Dorsolateral prefrontal cortex (tissue), 120 donors: ENCODE measurements at regions of chr6 and their contacts with region 1.

Region 1: GRCh38 chr6:132161283-132161682 is 210.1 kb upstream of the CCN2 start:
- DNase-seq: no peak
- H3K4me3 ChIP-seq: no peak overlapping the region
- H3K27ac ChIP-seq: no peak overlapping the region
- H3K27me3 ChIP-seq: no peaks in the 10 kb centered on the region
- CTCF ChIP-seq: peak in 55 of 56 donors; percentile 5 to 87 (median 69)

Region 2: DNA sequence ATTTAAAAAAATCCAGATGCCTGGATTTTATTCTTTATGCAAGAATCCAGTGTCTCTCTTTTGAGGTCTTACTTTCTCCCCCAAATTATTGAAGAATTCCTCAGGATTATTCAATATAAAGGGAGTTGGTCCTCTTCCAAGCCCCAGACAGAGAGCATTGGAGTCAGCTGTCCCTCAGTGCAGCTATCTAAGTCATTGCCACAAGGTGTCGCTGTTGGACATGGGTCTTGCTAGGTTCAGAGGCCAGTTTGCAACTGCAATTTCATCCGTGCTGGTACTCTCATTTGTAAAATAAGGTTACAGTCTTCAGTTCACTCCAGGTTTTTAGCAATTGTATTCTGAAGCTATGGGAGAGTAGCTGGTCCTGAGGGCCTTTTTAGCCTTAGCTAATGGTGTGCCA is 237.9 kb before region 1 on chr6:
- intact Hi-C with region 1: loop called (anchors 5 to 10 kb)
- DNase-seq: no peak
- H3K4me3 ChIP-seq: no peak overlapping the region
- H3K27ac ChIP-seq: no peak overlapping the region
- H3K27me3 ChIP-seq: peaks cover 0 to 8% (median 0%) of the 10 kb centered on the region in 45 donors
- CTCF ChIP-seq: peak in 55 of 56 donors; percentile 16 to 76 (median 58)

Region 3: GRCh38 chr6:131949909-131950766 is 211.1 kb before region 1 on chr6:
- intact Hi-C with region 1: loop called (anchors 2 to 5 kb)
- DNase-seq: peak; percentile 11 to 73 (median 58)
- H3K4me3 ChIP-seq: peak overlapping the region; percentile 44 to 82 (median 66)
- H3K27ac ChIP-seq: peak overlapping the region in 56 of 59 donors; percentile 14 to 92 (median 70)
- H3K27me3 ChIP-seq: peaks cover 0 to 9% (median 0%) of the 10 kb centered on the region in 45 donors
- CTCF ChIP-seq: peak in 52 of 56 donors; percentile 28 to 75 (median 55)

Region 4: DNA sequence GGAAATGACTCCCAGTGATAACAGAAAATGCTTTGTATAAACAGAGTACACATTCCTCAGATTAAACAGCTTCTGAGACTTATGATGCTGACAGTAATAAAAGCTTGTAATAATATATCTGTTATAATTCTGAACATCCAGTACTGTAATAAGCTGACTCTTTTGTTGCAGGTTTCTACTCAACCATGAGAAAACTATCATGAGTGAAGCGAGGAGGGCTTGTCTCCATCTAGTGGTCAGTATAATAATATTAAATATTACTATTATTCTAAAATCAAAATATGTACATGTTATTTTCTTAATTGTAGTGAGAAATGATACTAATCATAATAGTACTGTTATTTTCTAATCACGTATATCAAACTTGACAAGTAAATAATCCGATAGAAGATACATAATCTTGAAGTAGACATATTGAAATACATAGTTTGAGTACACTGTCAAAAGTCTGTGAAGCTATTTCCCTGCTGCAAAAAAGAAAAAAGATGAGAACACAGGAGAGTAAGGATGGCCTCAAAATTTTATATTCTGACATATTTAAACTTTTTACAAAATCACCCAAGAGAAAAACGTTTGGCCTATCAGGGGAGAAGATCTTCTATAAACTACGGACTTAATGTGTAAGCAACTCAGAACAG is 56.9 kb after region 1 on chr6:
- intact Hi-C with region 1: loop called in 1 of 2 experiments (anchors 10 kb)
- DNase-seq: no peak
- H3K4me3 ChIP-seq: no peak overlapping the region
- H3K27ac ChIP-seq: no peak overlapping the region
- H3K27me3 ChIP-seq: peaks cover 0 to 3% (median 0%) of the 10 kb centered on the region in 45 donors
- CTCF ChIP-seq: peak; percentile 48 to 89 (median 68)

Region 5: DNA sequence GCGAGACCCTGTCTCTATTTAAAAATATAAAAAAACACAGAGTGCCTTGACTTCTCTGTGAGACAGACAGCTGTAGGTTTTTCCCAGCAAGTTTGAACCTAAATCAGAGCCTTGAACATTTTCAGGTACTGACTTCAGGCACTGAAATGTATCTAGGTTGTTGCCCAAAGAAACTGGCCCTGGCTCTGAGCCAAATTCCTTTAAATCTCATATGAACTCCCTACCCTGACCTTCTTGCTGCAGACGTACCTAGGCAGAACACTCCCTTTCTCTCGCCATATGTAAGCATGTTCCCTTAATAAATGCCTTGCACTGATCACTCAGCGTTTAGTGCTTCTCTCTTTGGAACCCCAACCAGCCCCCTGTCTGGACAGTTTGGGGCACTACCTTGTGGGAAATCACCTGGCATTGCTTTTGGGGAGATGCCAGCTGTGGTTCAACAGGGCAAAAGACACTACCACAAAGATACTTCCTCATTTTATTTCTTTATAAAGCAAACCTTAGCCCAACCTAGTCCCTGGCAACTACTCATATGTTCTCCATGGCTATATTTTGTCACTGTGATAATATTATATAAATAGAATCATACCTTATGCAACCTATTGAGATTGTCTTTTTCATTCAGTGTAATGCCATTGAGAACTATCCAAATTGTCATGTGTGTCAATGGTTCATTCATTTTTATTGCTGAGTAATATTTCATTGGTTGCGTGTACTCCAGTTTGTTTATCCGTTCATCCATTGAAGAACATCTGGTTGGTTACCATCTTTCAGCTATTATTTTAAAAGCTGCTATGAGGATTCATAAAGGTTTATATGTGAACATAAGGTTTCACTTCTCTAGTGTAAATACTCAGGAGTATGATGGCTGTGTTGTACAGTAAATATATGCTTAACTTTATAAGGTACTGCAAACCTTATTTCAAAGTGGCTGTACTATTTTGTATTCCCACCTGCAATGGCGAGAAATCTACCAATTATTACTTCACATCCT is 125.0 kb after region 1 on chr6:
- intact Hi-C with region 1: no loop called
- DNase-seq: no peak
- H3K4me3 ChIP-seq: no peak overlapping the region
- H3K27ac ChIP-seq: no peak overlapping the region
- H3K27me3 ChIP-seq: no peaks in the 10 kb centered on the region
- CTCF ChIP-seq: no peak

Region 6: GRCh38 chr6:132607544-132608233 is 446.4 kb after region 1 on chr6:
- intact Hi-C with region 1: no loop called
- DNase-seq: no peak
- H3K4me3 ChIP-seq: no peak overlapping the region
- H3K27ac ChIP-seq: no peak overlapping the region
- H3K27me3 ChIP-seq: no peaks in the 10 kb centered on the region
- CTCF ChIP-seq: no peak